ENCODE measurements at regions of chr3 and their contacts with region 1.

Region 1: GRCh38 chr3:30342319-30343060 is 263.9 kb upstream of the TGFBR2 start:
- DNase-seq: no peak
- ATAC-seq: peak; percentile 74 to 86 (median 86)
- H3K4me3 ChIP-seq: no peak overlapping the region
- H3K27ac ChIP-seq: peak overlapping the region; percentile 53
- H3K4me1 ChIP-seq: peaks cover 17% of the 10 kb centered on the region
- H3K27me3 ChIP-seq: no peaks in the 10 kb centered on the region
- CTCF ChIP-seq: no peak

Region 2: GRCh38 chr3:30269751-30270445 is 72.6 kb before region 1 on chr3:
- intact Hi-C with region 1: no loop called
- DNase-seq: no peak
- ATAC-seq: no peak
- H3K4me3 ChIP-seq: no peak overlapping the region
- H3K27ac ChIP-seq: no peak overlapping the region
- H3K4me1 ChIP-seq: no peaks in the 10 kb centered on the region
- H3K27me3 ChIP-seq: no peaks in the 10 kb centered on the region
- CTCF ChIP-seq: no peak

Region 3: GRCh38 chr3:30292192-30292893 is 50.1 kb before region 1 on chr3:
- intact Hi-C with region 1: loop called in 1 of 2 experiments (anchors 5 kb)
- DNase-seq: no peak
- ATAC-seq: no peak
- H3K4me3 ChIP-seq: no peak overlapping the region
- H3K27ac ChIP-seq: no peak overlapping the region
- H3K4me1 ChIP-seq: peaks cover 9% of the 10 kb centered on the region
- H3K27me3 ChIP-seq: no peaks in the 10 kb centered on the region
- CTCF ChIP-seq: no peak